ENCODE measurements at regions of chr3 and their contacts with region 1.

Region 1: DNA sequence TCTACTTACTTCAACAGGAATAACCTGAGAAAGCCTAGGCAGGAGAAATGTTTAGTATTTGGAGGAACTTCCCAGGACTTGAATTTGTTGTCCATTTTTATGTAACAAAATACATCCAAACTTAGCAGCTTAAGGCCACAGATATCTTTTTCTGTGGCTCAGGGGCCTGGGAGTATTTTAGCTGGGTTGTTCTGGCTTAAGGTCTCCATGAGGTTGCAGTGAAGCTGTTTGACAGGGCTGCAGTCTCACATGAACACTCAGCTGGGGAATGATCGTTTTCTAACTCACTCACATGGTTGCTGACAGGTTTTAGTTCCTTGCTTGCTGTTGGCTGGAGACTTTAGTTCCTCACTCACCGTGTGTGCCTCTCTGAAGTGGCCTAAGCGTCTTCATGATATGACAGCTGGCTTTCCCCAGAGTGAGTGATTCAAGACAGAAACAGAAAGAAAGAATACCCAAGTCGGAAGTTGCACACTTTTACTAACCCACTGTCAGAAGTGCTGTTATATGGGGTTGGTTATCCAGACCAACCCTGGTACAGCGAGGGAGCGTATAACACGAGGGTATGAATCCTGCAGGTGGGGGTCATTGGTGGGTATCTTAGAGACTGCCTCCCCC is 229.7 kb upstream of the TBL1XR1 start:
- DNase-seq: peak; percentile 85
- H3K4me3 Mint-ChIP-seq: peak overlapping the region; percentile 40
- H3K27ac Mint-ChIP-seq: peak overlapping the region; percentile 92
- H3K4me1 Mint-ChIP-seq: peaks cover 29% of the 10 kb centered on the region
- H3K27me3 Mint-ChIP-seq: peaks cover 2% of the 10 kb centered on the region

Region 2: DNA sequence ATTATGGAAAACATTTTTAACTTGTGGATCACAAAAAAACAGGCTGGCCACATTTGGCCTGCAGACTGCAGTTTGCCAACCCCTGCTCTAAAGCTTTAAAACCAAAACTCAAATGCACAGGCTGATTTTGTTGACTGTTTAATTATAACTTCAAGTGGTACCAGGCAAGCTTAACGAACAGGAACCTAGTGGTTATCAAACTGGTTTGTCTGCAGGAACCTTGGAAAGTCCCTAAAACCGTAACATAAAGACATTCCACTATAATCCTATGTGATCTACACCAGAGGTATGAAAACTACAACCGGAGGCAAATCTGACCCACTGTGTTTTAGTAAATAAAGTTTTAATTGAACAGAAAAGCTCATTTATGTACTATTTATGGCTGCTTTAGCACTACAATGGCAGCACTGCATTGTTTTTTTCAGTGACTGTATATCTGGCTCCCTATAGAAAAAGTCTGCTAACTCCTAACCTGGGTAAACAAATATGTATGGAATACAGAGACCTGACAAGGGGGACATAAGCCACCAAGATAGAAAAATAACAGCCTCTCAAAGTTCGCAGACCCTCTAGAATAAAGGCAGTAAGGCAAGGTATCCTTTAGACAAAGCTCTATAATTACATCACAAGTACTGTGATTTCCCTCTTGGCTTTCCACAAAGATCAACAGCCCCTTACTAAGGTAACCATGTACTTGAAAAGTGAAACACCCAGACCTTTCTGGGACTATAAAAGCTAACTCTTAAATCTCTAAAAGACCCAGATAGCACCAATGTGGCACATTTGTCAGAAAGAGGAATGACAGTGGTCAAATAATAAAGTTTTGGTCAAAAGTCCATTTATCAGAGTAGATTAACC is 281.8 kb before region 1 on chr3:
- CTCF ChIA-PET with region 1: no interaction called
- intact Hi-C with region 1: loop called (anchors 5 kb)
- DNase-seq: no peak
- H3K4me3 Mint-ChIP-seq: no peak overlapping the region
- H3K27ac Mint-ChIP-seq: peak overlapping the region; percentile 56
- H3K4me1 Mint-ChIP-seq: peaks cover 67% of the 10 kb centered on the region
- H3K27me3 Mint-ChIP-seq: no peaks in the 10 kb centered on the region

Region 3: DNA sequence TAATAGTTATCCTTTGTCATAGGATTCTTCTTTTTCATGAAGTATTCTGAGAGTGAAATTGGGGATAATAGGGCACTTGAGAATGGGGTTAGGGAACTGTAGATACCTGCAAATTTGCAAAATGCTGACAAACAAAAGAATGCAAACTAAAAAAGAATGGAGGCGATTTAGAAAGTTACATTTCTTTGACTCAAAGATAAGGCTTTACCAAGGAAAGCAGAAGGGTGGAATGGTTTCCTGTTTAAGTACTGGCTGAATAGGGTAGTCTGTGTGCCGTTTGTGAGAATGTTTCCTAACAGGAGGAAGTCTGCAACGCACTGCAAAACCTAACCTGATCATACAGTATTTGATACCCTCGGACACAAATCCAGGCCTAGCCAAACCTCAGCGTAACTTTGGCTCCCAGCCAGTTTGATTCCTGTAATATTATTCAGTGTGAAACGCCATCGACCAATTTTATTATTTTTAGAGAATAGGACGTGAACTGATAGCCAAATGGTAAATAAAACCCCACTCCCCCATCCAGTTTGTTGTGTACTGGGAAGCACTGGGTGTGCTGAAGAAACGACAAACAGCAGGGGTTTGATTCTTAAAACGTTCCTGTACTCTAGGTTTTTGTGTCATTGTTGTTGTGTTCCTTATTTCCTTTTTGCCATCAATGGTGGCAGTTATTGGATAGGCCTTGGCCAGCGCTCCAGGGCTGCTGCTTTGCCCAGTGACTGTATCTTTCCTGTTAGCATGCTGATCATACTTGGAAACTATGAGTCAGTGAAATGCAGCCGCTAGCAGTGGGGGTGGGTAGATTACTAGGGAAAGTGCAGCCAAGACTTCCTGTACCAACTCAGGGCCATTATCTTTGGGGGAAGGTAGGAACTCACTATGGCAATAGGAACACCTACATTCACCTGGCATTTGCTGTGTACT is 81.7 kb before region 1 on chr3:
- CTCF ChIA-PET with region 1: interaction called, 5 read pairs
- intact Hi-C with region 1: loop called (anchors 1 kb)
- DNase-seq: peak; percentile 86
- H3K4me3 Mint-ChIP-seq: peak overlapping the region; percentile 34
- H3K27ac Mint-ChIP-seq: peak overlapping the region; percentile 87
- H3K4me1 Mint-ChIP-seq: peaks cover 42% of the 10 kb centered on the region
- H3K27me3 Mint-ChIP-seq: no peaks in the 10 kb centered on the region

Region 4: DNA sequence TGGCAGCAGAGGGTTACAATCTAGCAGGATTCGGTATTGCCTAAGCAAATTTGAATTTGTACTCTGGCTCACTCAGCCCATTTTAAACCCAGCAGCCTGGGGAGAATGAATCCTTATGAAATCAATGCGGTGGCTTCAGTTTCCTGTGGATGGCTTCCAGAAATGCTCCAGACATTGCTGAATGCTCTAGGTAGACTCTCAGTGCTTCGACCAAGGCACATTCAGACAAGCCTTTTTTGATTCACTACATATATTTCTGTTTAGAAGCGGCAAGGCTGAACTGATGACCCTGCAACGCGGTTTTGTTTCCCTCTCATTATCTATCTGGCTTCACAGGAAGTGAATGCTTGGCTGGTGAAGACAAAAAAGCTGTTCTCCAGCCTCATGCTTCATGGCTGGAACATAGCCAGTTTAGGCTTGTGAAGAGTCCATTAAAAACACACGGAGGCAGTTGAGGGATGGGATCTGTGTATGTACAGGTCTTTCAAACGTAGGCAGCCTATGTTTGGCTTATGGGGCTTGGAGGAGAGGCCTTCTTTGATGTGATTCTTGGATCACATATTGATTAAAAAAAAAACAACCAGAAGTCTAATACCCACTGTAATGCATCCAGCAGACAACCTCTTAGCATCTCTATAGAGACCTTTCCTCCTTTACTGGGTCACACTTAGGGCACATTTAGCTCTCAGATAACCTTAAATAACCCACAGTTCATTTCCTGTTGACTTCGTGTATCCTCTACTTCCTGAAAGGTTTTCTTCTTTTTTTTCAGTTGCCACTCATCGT is 170.5 kb after region 1 on chr3:
- CTCF ChIA-PET with region 1: interaction called, 3 read pairs
- intact Hi-C with region 1: loop called (anchors 2 kb)
- DNase-seq: peak; percentile 51
- H3K4me3 Mint-ChIP-seq: peak overlapping the region; percentile 54
- H3K27ac Mint-ChIP-seq: peak overlapping the region; percentile 91
- H3K4me1 Mint-ChIP-seq: peaks cover 66% of the 10 kb centered on the region
- H3K27me3 Mint-ChIP-seq: no peaks in the 10 kb centered on the region

Region 5: DNA sequence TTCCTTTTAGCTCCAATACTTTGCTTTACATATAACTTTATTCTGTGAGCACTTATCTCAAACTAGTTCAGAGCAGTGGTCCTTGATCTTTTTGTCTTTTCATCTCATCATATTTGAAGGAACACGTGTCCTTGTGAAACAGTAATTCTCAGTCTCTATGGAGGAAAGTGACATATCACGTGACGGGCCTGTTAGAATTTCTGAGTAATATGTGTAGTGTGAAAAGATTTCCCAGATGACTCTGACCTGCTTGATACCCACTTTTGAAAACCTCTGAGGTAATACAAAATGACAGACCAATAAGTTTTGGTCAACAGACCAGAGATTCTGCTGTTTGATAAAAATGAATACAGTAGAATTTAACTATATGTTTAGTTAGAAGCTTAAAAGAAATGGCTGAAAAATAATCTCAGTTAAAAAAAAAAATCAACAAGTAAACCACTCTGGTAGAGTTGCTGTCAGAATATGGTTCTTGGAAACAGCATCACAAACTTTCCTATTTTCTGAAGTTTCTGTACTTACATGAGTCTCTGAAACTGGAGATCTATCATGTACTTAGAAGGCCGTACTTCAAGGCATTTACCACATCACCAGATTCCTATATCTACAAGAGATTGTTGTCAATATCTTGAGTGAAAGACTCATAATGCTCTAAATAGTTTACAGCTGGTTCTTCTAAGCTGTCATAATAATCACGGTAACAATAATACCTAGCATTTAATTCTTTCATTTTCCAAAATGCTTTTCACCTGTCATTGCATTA is 360.5 kb after region 1 on chr3:
- CTCF ChIA-PET with region 1: no interaction called
- intact Hi-C with region 1: loop called (anchors 1 kb)
- DNase-seq: peak; percentile 36
- H3K4me3 Mint-ChIP-seq: no peak overlapping the region
- H3K27ac Mint-ChIP-seq: peak overlapping the region; percentile 65
- H3K4me1 Mint-ChIP-seq: peaks cover 29% of the 10 kb centered on the region
- H3K27me3 Mint-ChIP-seq: no peaks in the 10 kb centered on the region

Region 6: DNA sequence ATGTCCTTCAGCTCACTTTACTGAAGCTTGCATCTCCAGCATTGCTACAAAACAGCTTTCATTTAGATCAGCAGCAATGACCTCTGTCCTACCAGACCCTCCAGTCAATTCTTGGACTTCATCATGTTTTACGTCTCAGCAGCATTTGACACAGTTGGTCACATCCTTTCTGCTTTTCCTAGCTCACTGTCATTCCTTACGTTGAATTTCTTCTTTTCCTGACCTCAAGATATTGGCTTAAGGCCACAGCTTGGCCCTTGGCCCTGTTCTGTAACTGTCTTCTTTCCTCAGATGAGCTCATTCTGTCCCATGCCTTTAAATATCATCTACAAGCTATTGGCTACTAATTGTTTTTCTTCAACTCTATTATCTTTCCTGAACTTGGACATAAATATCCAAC is 533.0 kb after region 1 on chr3:
- CTCF ChIA-PET with region 1: no interaction called
- intact Hi-C with region 1: no loop called
- DNase-seq: no peak
- H3K4me3 Mint-ChIP-seq: no peak overlapping the region
- H3K27ac Mint-ChIP-seq: no peak overlapping the region
- H3K4me1 Mint-ChIP-seq: no peaks in the 10 kb centered on the region
- H3K27me3 Mint-ChIP-seq: no peaks in the 10 kb centered on the region

Measured in activated naive CD4-positive, alpha-beta T cell treated with anti-CD3 and anti-CD28 coated beads for 36 hours (primary cell).